RWPE1 (cell line): ENCODE measurements at regions of chr6 and their contacts with region 1.

Region 1: GRCh38 chr6:27809939-27810767 is 102.0 kb downstream of the OR2B2 start:
- DNase-seq: peak; percentile 92
- H3K27ac ChIP-seq: peak overlapping the region; percentile 94
- CTCF ChIP-seq: no peak

Region 2: DNA sequence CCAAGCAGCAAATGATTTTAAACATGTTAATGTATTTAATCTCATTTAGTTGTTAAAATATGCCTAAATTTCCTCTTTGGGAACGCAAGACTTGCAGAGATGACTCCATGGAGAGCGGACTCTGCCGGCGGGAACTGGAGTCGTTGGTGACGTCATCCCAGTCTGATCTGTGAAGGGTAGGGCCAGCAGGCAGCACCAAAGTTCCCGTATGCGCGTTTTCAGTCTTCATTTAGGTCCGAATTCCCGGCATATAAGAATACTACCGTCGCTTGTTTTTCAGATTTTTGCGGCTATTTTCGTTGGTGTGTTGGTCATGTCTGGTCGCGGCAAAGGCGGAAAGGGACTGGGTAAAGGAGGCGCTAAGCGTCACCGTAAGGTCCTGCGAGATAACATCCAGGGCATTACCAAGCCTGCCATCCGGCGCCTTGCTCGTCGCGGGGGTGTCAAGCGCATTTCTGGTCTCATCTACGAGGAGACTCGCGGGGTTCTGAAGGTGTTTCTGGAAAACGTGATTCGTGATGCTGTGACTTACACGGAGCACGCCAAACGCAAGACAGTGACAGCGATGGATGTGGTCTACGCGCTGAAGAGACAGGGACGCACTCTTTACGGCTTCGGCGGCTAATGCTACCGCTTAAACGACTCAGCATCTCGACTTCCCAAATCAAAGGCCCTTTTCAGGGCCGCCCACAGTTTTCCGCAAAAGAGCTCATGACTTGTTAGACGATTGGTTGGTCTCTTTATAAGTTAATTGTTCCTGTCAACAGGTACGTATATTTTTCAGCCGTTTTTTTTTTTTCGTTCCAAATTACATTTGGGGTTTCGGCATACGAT is 1605.6 kb before region 1 on chr6:
- CTCF ChIA-PET with region 1: no interaction called
- POLR2A ChIA-PET with region 1: interaction called, 10 read pairs
- DNase-seq: peak; percentile 96
- H3K27ac ChIP-seq: peak overlapping the region; percentile 97
- CTCF ChIP-seq: peak; percentile 40; the same call in 1 of the 2 replicates

Region 3: GRCh38 chr6:27871924-27872638 is 61.9 kb after region 1 on chr6:
- CTCF ChIA-PET with region 1: no interaction called
- POLR2A ChIA-PET with region 1: interaction called, 16 read pairs
- DNase-seq: peak; percentile 97
- H3K27ac ChIP-seq: peak overlapping the region; percentile 96
- CTCF ChIP-seq: peak; percentile 18; the same call in 1 of the 2 replicates